A549 (cell line): ENCODE measurements at regions of chr12 and their contacts with region 1.

Region 1: GRCh38 chr12:100554608-100555077 is 18.8 kb upstream of the GAS2L3 start:
- DNase-seq: peak; percentile 68 to 89
- ATAC-seq: peak; percentile 91 to 94
- H3K4me3 ChIP-seq: no peak overlapping the region
- H3K27ac ChIP-seq: no peak overlapping the region
- H3K4me1 ChIP-seq: peaks cover 11% of the 10 kb centered on the region; the same call in 2 of the 3 replicates
- CTCF ChIP-seq: peak; percentile 99
- EP300 ChIP-seq: no peak
- POLR2A ChIP-seq: no peak
- RAD21 ChIP-seq: peak; percentile 99

Region 2: GRCh38 chr12:100544165-100544564 is 10.5 kb before region 1 on chr12:
- CTCF ChIA-PET with region 1: interaction called, 16 read pairs
- POLR2A ChIA-PET with region 1: no interaction called
- DNase-seq: peak in 1 of 2 experiments; percentile 5
- ATAC-seq: peak in 1 of 2 experiments; percentile 56; a peak in 2 of 6 replicates
- H3K4me3 ChIP-seq: no peak overlapping the region
- H3K27ac ChIP-seq: no peak overlapping the region
- H3K4me1 ChIP-seq: peaks cover 16% of the 10 kb centered on the region
- CTCF ChIP-seq: no peak
- EP300 ChIP-seq: no peak
- POLR2A ChIP-seq: no peak
- RAD21 ChIP-seq: no peak

Region 3: GRCh38 chr12:101277443-101277842 is 722.8 kb after region 1 on chr12:
- CTCF ChIA-PET with region 1: no interaction called
- POLR2A ChIA-PET with region 1: no interaction called
- DNase-seq: no peak
- ATAC-seq: no peak
- H3K4me3 ChIP-seq: no peak overlapping the region
- H3K27ac ChIP-seq: no peak overlapping the region
- H3K4me1 ChIP-seq: peaks cover 7% of the 10 kb centered on the region; the same call in 2 of the 3 replicates
- CTCF ChIP-seq: no peak
- EP300 ChIP-seq: no peak
- POLR2A ChIP-seq: no peak
- RAD21 ChIP-seq: no peak